Caco-2 (cell line): ENCODE measurements at regions of chr7 and their contacts with region 1.

Region 1: GRCh38 chr7:141737834-141738591 is at the start of gene SSBP1:
- DNase-seq: peak; percentile 93 to 94
- H3K4me3 ChIP-seq: peak within 1 kb of the TSS; percentile 87
- H3K4me3 Mint-ChIP-seq: peak within 1 kb of the TSS; percentile 87
- H3K27ac Mint-ChIP-seq: peak within 1 kb of the TSS; percentile 98
- H3K4me1 ChIP-seq: 0 out of 2 replicates have a peak, but pooled peaks cover 5% of the 10 kb centered on the region
- H3K4me1 Mint-ChIP-seq: peaks cover 24% of the 10 kb centered on the region
- H3K27me3 ChIP-seq: no peaks in the 10 kb centered on the region
- H3K27me3 Mint-ChIP-seq: no peaks in the 10 kb centered on the region
- CTCF ChIP-seq: peak; percentile 61 to 92
- total RNA-seq, gene SSBP1: 191 and 199 TPM in 2 replicates

Region 2: DNA sequence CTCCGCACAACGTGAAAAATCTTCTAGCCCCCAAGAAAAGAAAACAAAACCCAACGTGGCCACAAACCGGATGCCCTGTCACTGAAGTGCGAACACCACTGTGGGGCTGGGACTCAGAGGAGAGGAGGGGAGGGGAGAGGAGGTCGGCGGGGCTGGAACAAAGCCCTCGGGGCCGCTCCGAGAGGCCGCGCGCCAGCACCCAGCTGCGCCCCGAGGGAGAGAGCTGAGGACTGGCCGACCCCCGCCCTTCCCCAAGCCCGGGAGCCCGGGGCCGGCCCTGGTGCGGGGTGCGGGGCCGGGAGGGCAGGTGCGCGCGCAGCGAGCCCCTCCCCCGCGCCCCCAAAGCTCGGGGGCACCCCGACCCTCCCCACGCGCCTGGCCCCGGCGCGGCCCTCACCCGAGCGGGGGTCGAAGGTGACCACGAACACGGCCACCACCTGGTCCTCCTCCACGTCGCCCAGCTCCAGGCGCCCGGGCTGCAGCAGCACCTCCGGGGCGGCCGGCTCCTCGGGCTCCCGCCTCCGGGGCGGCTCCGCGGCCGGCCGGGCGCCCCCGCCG is 36.4 kb before region 1 on chr7:
- CTCF ChIA-PET with region 1: interaction called, 11 read pairs
- POLR2A ChIA-PET with region 1: interaction called, 3 read pairs
- intact Hi-C with region 1: loop called (anchors 2 kb)
- DNase-seq: peak; percentile 59 to 60
- H3K4me3 ChIP-seq: peak overlapping the region; percentile 84
- H3K4me3 Mint-ChIP-seq: peak overlapping the region; percentile 60
- H3K27ac Mint-ChIP-seq: no peak overlapping the region
- H3K4me1 ChIP-seq: peaks cover 46% of the 10 kb centered on the region
- H3K4me1 Mint-ChIP-seq: peaks cover 28% of the 10 kb centered on the region
- H3K27me3 ChIP-seq: no peaks in the 10 kb centered on the region
- H3K27me3 Mint-ChIP-seq: no peaks in the 10 kb centered on the region
- CTCF ChIP-seq: no peak

Region 3: DNA sequence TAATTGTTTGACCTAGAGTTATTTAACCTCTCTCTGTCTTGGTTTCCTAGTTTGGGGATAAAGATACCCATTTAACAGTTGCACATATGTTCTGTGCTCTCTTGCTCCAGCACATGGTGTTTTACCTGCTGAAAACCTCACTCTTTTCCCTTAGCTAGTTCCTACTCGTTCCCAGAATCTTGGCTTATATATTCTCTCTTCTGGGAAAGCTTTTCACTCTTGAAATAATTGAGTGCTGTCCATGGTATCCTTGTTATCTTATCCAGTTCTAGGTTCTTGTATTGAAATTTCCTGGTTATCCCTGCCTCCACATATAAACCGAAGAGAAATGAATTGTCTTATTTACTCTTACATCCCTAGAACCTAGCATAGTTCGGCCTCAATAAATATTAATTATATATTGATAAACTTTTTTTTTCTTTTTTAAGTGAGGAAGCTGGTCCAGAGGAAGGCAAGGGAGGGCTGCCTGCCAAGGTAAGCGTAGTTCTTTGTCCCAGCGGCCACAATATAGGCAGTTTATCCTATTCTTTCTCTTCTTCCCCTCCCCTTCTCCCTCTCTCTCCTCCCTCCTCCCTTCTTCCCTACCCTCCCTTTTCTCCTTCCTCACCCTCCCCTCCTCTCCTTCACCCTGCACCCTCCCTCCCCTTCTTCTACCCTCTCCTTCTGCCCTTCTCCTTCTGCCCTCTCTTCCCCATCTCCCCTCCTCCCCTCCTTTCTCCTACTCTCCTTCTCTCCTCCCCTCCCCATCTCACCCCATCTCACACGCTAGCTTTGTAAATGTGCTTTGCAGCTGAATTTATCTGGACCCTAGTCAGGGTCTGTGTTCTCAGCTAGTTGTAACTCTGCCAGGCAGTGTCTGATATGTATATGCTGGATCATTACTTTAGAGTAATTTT is 22.0 kb before region 1 on chr7:
- CTCF ChIA-PET with region 1: interaction called, 19 read pairs
- POLR2A ChIA-PET with region 1: interaction called, 16 read pairs
- intact Hi-C with region 1: loop called (anchors 1 kb)
- DNase-seq: no peak
- H3K4me3 ChIP-seq: peak overlapping the region; percentile 24
- H3K4me3 Mint-ChIP-seq: peak overlapping the region; percentile 18
- H3K27ac Mint-ChIP-seq: no peak overlapping the region
- H3K4me1 ChIP-seq: peaks cover 34% of the 10 kb centered on the region
- H3K4me1 Mint-ChIP-seq: peaks cover 14% of the 10 kb centered on the region
- H3K27me3 ChIP-seq: no peaks in the 10 kb centered on the region
- H3K27me3 Mint-ChIP-seq: no peaks in the 10 kb centered on the region
- CTCF ChIP-seq: no peak

Region 4: DNA sequence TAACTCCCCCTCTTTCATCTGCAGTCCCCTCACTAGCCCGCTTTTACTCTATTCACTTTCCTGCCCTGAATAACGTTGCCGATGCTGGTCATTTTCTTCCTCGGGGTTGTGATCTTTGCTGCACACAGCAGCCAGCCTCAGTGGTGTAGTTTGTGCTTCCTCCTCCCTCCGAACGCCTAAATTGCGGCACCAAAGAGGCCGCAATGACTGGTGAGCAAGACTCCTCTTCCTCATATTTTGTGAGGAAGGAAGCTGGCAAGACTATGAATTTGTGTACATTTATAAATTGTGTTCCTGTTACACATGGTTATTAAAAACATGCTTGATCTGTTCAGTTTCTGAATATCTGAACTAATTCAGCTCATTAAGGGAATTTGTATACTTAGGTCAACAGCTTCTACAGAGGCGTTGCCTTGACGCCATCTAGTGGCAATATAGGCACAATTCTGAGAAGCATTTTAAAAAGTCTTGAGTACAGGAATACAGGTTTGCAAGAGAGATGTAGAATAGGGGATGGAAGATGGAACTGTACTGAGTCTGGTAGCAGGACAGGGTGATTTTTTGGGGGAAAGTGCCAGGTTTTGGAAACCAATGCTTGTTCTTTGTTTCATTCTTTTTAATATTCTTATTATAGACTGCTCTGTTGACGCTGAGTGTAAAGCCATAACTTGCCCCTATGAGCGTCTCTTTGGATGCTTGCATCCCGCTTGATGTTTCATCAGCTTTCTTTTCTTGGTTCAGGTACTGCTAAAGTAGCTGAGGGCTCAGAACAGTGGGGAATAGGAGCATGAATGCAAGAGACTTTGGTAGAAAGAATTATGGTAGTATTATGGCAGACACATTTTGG is 47.9 kb after region 1 on chr7:
- CTCF ChIA-PET with region 1: interaction called, 11 read pairs
- POLR2A ChIA-PET with region 1: interaction called, 3 read pairs
- intact Hi-C with region 1: no loop called
- DNase-seq: peak; percentile 37 to 41
- H3K4me3 ChIP-seq: no peak overlapping the region
- H3K4me3 Mint-ChIP-seq: no peak overlapping the region
- H3K27ac Mint-ChIP-seq: no peak overlapping the region
- H3K4me1 ChIP-seq: no peaks in the 10 kb centered on the region
- H3K4me1 Mint-ChIP-seq: no peaks in the 10 kb centered on the region
- H3K27me3 ChIP-seq: no peaks in the 10 kb centered on the region
- H3K27me3 Mint-ChIP-seq: no peaks in the 10 kb centered on the region
- CTCF ChIP-seq: peak; percentile 74 to 86

Region 5: DNA sequence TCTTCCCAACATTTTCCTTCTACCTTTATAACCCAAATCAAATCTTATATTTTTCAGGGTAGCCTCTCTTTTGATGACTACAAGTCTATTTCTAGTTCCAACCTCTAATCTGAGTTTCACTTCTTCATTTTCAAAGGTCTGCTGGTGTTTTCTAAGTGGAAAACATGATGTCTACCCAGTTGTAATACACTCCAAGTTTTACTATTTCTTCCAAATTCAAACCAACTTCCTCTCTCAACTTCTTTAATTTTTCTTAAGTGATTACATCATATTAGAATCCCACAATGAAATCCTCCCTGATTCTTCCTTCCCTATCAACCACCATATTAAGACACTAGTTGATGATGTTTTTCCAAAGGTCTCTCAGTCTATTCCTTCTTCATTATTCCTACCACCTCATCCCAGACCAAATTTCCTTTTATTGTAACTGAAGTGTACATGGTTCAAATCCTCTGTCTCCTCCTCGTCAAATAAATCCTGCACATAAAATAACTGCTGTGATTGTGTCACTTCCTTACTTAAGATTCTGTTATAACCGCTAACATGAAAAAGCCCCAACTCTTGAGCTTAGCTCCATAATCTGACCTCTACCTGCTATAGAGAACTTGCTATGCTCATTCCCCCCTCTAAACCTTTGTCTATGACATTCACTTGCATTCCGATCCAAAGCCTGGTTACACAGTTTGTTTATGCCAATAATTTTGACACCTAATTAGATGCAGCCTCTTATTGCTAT is 222.8 kb after region 1 on chr7:
- CTCF ChIA-PET with region 1: no interaction called
- POLR2A ChIA-PET with region 1: no interaction called
- intact Hi-C with region 1: no loop called
- DNase-seq: no peak
- H3K4me3 ChIP-seq: no peak overlapping the region
- H3K4me3 Mint-ChIP-seq: no peak overlapping the region
- H3K27ac Mint-ChIP-seq: no peak overlapping the region
- H3K4me1 ChIP-seq: no peaks in the 10 kb centered on the region
- H3K4me1 Mint-ChIP-seq: no peaks in the 10 kb centered on the region
- H3K27me3 ChIP-seq: no peaks in the 10 kb centered on the region
- H3K27me3 Mint-ChIP-seq: peaks cover 9% of the 10 kb centered on the region
- CTCF ChIP-seq: no peak

Region 6: DNA sequence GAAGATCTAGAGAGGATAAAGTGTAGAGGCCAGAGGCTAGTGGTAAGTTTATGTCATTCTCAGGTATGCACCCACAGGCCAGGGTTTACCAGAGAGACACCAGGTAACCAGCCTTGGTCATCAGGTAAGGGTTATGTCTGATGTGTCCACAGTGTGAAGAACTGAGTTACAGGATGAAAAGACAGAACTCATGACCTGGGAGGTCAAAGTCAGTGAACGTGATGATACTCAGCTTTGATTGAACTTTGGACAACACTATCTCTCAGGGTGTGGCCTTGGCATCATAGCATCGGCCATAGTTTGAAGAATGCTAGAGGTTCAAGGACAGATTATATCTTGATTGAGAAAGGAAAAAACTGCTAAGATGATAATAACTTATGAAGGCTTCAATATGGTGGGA is 295.1 kb after region 1 on chr7:
- CTCF ChIA-PET with region 1: no interaction called
- POLR2A ChIA-PET with region 1: no interaction called
- intact Hi-C with region 1: no loop called
- DNase-seq: no peak
- H3K4me3 ChIP-seq: no peak overlapping the region
- H3K4me3 Mint-ChIP-seq: no peak overlapping the region
- H3K27ac Mint-ChIP-seq: no peak overlapping the region
- H3K4me1 ChIP-seq: peaks cover 4% of the 10 kb centered on the region; the same call in 1 of the 2 replicates
- H3K4me1 Mint-ChIP-seq: no peaks in the 10 kb centered on the region
- H3K27me3 ChIP-seq: no peaks in the 10 kb centered on the region
- H3K27me3 Mint-ChIP-seq: no peaks in the 10 kb centered on the region
- CTCF ChIP-seq: no peak

Region 7: DNA sequence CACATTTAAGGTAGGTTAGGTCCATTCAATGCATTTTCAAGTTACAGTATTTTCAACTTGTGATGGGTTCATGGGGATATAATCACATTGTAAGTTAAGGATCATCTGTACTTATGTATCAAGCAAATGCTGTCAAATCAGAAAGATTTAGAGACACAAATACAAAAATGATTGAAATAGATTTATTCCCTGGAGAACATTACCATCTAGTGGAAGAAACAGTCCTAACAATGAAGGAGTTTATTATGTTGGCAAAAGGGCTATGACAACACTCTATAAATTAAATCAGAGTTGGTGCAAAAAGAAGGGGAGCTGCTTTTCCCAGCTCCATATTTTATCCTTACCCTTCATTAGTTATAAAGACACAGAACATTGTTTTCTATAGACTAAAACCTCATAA is 450.8 kb after region 1 on chr7:
- CTCF ChIA-PET with region 1: no interaction called
- POLR2A ChIA-PET with region 1: no interaction called
- intact Hi-C with region 1: loop called (anchors 5 kb)
- DNase-seq: peak in 1 of 2 experiments; percentile 19
- H3K4me3 ChIP-seq: no peak overlapping the region
- H3K4me3 Mint-ChIP-seq: no peak overlapping the region
- H3K27ac Mint-ChIP-seq: no peak overlapping the region
- H3K4me1 ChIP-seq: no peaks in the 10 kb centered on the region
- H3K4me1 Mint-ChIP-seq: peaks cover 6% of the 10 kb centered on the region
- H3K27me3 ChIP-seq: no peaks in the 10 kb centered on the region
- H3K27me3 Mint-ChIP-seq: no peaks in the 10 kb centered on the region
- CTCF ChIP-seq: peak; percentile 40 to 56